Heart right ventricle (tissue), 16 donors: ENCODE measurements at regions of chrX and their contacts with region 1.

Region 1: DNA sequence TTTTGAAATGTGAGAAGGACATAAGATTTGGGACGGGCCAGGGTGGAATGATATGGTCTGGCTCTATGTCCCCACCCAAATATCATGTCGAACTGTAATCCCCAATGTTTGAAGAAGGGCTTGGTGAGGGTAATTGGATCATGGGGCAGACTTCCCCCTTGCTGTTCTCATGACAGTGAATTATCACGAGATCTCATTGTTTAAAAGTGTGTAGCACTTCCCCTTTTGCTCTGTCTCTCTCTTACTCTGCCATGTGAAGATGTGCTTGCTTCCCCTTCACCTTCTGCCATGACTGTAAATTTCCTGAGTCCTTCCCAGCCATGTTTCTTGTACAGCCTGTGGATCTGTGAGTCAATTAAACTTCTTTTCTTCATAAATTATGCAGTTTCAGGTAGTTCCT is 17.5 kb downstream of the MTMR8 start:
- DNase-seq: no peak
- ATAC-seq: no peak
- H3K4me3 ChIP-seq: no peak overlapping the region
- H3K27ac ChIP-seq: no peak overlapping the region
- H3K4me1 ChIP-seq: no peaks in the 10 kb centered on the region
- H3K27me3 ChIP-seq: no peaks in the 10 kb centered on the region
- CTCF ChIP-seq: no peak

Region 2: GRCh38 chrX:64176876-64177275 is 200.9 kb before region 1 on chrX:
- intact Hi-C with region 1: no loop called
- DNase-seq: no peak
- ATAC-seq: no peak
- H3K4me3 ChIP-seq: no peak overlapping the region
- H3K27ac ChIP-seq: no peak overlapping the region
- H3K4me1 ChIP-seq: no peaks in the 10 kb centered on the region
- H3K27me3 ChIP-seq: peaks cover 0 to 9% (median 0%) of the 10 kb centered on the region in 7 donors
- CTCF ChIP-seq: no peak

Region 3: DNA sequence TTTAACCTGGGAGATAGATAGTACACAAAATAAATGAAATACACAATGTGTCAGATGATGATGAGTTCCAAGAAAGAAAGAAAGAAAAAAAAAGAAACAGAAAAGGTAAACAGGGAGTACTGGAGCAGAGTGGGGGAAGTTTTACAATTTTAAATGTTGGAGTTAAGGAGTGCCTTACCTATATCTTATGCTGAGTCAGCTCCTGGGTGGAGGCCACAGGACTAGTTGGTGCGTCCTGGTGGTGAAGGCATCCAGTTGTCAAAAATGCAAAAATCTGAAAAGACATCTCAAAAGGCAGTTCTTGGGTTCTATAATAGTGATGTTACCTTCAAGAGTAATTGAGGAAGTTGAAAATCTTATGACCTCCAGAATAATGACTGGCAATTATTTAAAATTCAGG is 59.9 kb after region 1 on chrX:
- intact Hi-C with region 1: loop called in 1 of 10 experiments (anchors 10 kb)
- DNase-seq: no peak
- ATAC-seq: no peak
- H3K4me3 ChIP-seq: no peak overlapping the region
- H3K27ac ChIP-seq: no peak overlapping the region
- H3K4me1 ChIP-seq: no peaks in the 10 kb centered on the region
- H3K27me3 ChIP-seq: peaks cover 0 to 4% (median 0%) of the 10 kb centered on the region in 7 donors
- CTCF ChIP-seq: no peak